B cell (primary cell): ENCODE measurements at regions of chr6 and their contacts with region 1.

Region 1: GRCh38 chr6:139146317-139146726 is 11.4 kb downstream of the HECA start:
- DNase-seq: no peak
- ATAC-seq: no peak
- H3K4me3 ChIP-seq: no peak overlapping the region
- H3K4me3 Mint-ChIP-seq: peak overlapping the region; percentile 48
- H3K27ac ChIP-seq: no peak overlapping the region
- H3K27ac Mint-ChIP-seq: peak overlapping the region; percentile 6
- H3K4me1 ChIP-seq: peaks cover 63 to 73% of the 10 kb centered on the region in 2 donors
- H3K4me1 Mint-ChIP-seq: peaks cover 85% of the 10 kb centered on the region
- H3K27me3 ChIP-seq: no peaks in the 10 kb centered on the region
- H3K27me3 Mint-ChIP-seq: no peaks in the 10 kb centered on the region
- CTCF ChIP-seq: no peak

Region 2: GRCh38 chr6:139161817-139162284 is 15.5 kb after region 1 on chr6:
- CTCF ChIA-PET with region 1: no interaction called
- POLR2A ChIA-PET with region 1: no interaction called
- intact Hi-C with region 1: loop called (anchors 2 kb)
- DNase-seq: peak; percentile 78
- ATAC-seq: peak; percentile 93
- H3K4me3 ChIP-seq: no peak overlapping the region
- H3K4me3 Mint-ChIP-seq: peak overlapping the region; percentile 61
- H3K27ac ChIP-seq: peak overlapping the region; percentile 43 to 84
- H3K27ac Mint-ChIP-seq: peak overlapping the region; percentile 92
- H3K4me1 ChIP-seq: peaks cover 58 to 62% of the 10 kb centered on the region in 2 donors
- H3K4me1 Mint-ChIP-seq: peaks cover 77% of the 10 kb centered on the region
- H3K27me3 ChIP-seq: no peaks in the 10 kb centered on the region
- H3K27me3 Mint-ChIP-seq: no peaks in the 10 kb centered on the region
- CTCF ChIP-seq: no peak